ENCODE measurements at regions of chr14 and their contacts with region 1.

Region 1: DNA sequence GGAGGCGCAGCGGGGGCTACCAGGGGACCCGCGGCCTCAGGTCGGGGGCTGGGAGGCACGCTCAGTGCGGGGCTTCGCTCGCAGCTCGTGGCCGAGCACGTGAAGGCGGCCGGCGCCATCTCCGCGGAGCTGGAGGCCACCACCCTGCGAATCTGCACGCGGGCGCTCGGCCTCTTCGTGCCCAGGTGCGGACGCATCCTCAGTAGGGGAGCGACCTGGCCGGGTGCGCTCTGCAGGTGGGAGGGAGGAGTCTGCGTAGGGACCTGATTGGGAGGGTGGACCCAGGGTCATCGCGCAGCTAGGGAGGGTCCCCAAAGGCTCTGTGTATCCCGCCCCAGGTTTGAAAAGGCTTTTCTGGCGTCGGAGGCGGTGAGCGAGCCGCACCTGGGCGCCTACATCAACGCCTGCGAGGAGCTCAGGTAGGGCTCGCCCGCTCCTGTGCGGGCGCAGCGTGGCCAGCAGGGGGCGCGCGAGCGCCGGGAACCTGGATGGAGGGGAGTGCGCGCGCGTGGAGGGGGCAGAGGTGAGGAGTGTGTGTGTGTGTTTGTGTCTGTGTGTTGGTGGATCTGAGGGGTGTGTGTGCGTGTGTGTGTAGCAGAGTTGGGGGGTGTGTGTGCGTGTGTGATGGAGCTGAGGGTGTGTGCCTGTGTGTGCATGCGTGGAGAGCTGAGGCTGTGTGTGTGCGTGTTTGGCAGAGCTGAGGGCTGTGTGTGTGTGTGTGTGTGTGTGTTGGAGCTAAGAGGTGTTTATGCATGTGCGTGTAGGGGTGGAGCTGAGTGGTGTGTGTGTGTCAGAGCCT is 10.3 kb downstream of the EXOC3L4 start:
- DNase-seq: no peak
- ATAC-seq: peak; percentile 65
- H3K4me3 ChIP-seq: peak overlapping the region in 1 of 2 experiments; percentile 24; a peak in 1 of 4 replicates
- H3K27ac ChIP-seq: peak overlapping the region; percentile 63; the same call in 1 of the 2 replicates
- H3K4me1 ChIP-seq: peaks cover 16% of the 10 kb centered on the region
- H3K27me3 ChIP-seq: no peaks in the 10 kb centered on the region
- CTCF ChIP-seq: peak; percentile 93

Region 2: DNA sequence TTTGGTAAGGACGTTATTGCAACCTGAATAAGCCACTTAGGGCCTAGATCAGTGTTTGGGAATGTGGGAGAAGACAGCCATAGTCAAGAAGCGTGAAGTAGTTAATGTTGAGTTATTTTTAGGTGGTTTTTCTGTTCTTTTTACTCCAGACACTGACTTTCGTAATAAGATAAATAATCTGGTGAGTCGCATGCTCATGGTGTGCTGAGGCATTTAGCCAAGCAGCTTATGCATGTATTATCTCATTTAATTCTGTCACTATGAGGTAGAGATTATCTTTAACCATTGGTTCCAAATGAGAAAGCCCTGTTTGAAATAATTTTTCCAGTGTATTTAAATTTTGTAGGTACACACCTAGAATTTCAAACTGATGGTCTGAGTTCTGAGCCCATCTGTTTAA is 445.1 kb before region 1 on chr14:
- CTCF ChIA-PET with region 1: no interaction called
- POLR2A ChIA-PET with region 1: no interaction called
- in situ Hi-C with region 1: no loop called
- intact Hi-C with region 1: no loop called
- DNase-seq: no peak
- ATAC-seq: no peak
- H3K4me3 ChIP-seq: no peak overlapping the region
- H3K27ac ChIP-seq: no peak overlapping the region
- H3K4me1 ChIP-seq: peaks cover 16% of the 10 kb centered on the region
- H3K27me3 ChIP-seq: no peaks in the 10 kb centered on the region
- CTCF ChIP-seq: no peak

Region 3: DNA sequence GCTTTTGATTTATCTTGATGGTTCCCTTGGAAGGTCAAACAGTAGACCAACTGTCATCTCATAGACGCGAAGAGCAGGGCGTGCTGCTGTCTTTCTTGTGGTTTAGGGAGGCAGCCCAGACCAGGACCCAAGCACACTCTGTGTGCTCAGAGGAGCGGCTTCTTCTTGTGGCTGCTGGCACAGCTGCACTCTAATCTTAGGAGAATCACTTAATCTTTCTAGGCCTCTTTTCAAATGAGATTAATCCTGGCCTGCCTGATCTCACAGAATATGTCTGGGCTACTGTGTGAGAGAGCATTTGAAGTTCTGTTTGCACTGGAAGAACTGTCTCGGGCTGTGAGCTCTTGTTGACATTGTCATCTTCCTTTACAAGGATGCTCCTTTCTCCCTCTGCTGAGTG is 387.6 kb before region 1 on chr14:
- CTCF ChIA-PET with region 1: no interaction called
- POLR2A ChIA-PET with region 1: no interaction called
- in situ Hi-C with region 1: no loop called
- intact Hi-C with region 1: no loop called
- DNase-seq: no peak
- ATAC-seq: no peak
- H3K4me3 ChIP-seq: no peak overlapping the region
- H3K27ac ChIP-seq: no peak overlapping the region
- H3K4me1 ChIP-seq: no peaks in the 10 kb centered on the region
- H3K27me3 ChIP-seq: no peaks in the 10 kb centered on the region
- CTCF ChIP-seq: no peak

Region 4: DNA sequence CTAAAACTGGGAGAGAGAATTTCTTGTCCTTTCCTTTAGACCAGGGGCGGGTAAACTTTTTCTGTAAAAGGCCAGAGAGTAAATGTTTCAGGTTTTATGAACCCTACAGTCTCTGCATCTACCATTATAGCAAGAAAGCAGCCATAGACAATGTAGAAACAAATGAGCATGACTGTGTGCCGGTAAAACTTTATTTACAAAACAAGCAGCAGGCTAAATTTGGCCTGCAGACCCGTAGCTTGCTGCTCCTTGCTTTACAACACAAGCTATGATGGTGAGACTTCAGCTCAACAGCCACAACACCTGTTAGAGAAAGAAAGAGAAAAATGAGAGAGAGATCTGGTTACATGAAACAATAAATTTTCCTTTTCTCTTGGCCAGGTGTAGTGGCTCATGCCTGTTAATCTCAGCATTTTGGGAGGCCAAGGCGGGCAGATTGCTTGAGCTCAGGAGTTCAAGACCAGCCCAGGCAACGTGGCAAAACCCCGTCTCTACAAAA is 43.3 kb before region 1 on chr14:
- CTCF ChIA-PET with region 1: no interaction called
- POLR2A ChIA-PET with region 1: no interaction called
- in situ Hi-C with region 1: no loop called
- intact Hi-C with region 1: no loop called
- DNase-seq: no peak
- ATAC-seq: no peak
- H3K4me3 ChIP-seq: no peak overlapping the region
- H3K27ac ChIP-seq: no peak overlapping the region
- H3K4me1 ChIP-seq: peaks cover 11% of the 10 kb centered on the region
- H3K27me3 ChIP-seq: no peaks in the 10 kb centered on the region
- CTCF ChIP-seq: no peak

Region 5: GRCh38 chr14:103133216-103134140 is 28.6 kb after region 1 on chr14:
- CTCF ChIA-PET with region 1: interaction called, 12 read pairs
- POLR2A ChIA-PET with region 1: interaction called, 4 read pairs
- in situ Hi-C with region 1: no loop called
- intact Hi-C with region 1: no loop called
- DNase-seq: no peak
- ATAC-seq: no peak
- H3K4me3 ChIP-seq: no peak overlapping the region
- H3K27ac ChIP-seq: no peak overlapping the region
- H3K4me1 ChIP-seq: peaks cover 75% of the 10 kb centered on the region
- H3K27me3 ChIP-seq: no peaks in the 10 kb centered on the region
- CTCF ChIP-seq: no peak

Region 6: DNA sequence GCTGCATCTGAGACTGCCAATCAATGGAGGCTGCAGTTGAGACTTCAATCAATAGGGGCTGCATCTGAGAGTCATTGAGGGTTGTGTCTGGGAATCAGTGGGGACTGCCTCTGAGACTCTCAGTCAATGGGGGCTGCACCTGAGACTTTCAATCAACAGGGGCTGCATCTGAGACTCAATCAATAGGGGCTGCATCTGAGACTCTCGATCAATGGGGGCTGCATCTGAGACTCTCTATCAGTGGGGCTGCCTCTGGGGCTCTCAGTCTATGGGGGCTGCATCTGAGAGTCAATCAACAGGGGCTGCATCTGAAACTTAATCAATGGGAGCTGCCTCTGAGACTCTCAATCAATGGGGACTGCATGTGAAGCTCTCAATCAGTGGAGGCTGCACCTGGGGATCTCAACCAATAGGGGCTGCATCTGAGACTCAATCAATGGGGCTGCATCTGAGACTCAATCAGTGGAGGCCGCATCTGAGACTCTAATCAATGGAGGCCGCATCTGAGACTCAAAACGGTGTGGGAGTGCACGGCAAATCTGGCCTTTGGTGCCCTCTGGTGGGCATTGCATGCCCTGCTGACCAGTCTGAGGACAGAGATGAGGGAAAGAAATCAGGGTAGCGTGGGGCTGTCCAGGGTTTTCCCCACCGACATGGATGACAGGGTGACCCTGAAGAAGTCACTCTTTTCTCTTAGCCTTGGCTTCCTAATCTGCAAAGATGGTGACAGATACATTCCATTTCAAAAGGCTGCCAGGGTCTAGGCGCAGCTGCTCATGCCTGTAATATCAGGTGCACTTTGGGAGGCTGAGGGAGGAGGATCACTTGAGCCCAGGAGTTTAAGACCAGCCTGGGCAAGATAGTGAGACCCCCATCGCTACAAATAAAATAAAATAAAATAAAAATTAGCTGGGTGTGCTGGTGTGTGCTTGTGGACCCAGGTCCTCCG is 187.8 kb after region 1 on chr14:
- CTCF ChIA-PET with region 1: interaction called, 13 read pairs
- POLR2A ChIA-PET with region 1: no interaction called
- in situ Hi-C with region 1: no loop called
- intact Hi-C with region 1: loop called (anchors 10 kb)
- DNase-seq: peak; percentile 55
- ATAC-seq: peak; percentile 95
- H3K4me3 ChIP-seq: no peak overlapping the region
- H3K27ac ChIP-seq: no peak overlapping the region
- H3K4me1 ChIP-seq: no peaks in the 10 kb centered on the region
- H3K27me3 ChIP-seq: no peaks in the 10 kb centered on the region
- CTCF ChIP-seq: peak; percentile 85

Region 7: DNA sequence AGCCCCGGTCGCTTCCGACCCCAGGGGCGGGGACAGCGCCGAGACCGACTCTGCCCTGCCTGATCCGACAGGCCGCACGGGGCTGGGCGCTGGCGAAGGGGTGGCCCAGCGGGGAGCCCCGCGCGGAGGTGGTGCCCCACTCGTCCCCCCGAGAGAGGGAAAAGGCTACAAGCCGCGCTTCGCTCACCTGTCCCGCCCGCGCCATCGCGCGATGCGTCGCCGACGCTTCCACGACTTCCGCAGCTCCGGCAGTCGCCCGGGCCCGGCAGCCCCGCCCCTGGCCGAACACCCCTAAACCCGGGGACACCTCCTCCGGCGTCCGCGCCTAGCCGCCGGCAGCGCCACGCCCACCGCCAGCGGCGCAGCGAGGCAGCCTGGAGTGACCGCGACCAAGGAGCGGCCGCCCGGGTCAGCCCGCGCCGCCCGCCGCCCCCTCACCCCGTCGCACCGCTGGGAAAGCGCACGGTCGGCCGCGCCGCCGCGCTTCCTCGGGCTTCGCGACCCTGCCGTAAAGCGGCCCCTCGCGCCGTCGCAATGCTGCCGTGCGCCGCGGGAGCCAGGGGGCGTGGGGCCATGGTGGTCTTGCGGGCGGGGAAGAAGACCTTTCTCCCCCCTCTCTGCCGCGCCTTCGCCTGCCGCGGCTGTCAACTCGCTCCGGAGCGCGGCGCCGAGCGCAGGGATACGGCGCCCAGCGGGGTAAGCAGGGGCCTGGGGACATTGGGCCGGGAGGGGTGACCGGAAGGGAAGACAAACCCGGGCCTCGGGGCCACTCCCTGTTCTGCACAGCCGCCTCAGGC is 457.8 kb after region 1 on chr14 and contains the starts of genes BAG5 and COA8:
- CTCF ChIA-PET with region 1: no interaction called
- POLR2A ChIA-PET with region 1: no interaction called
- in situ Hi-C with region 1: no loop called
- intact Hi-C with region 1: no loop called
- DNase-seq: no peak
- ATAC-seq: peak; percentile 90
- H3K4me3 ChIP-seq: peak within 1 kb of the TSS; percentile 89 to 97
- H3K27ac ChIP-seq: peak within 1 kb of the TSS; percentile 86
- H3K4me1 ChIP-seq: peaks cover 34% of the 10 kb centered on the region
- H3K27me3 ChIP-seq: no peaks in the 10 kb centered on the region
- CTCF ChIP-seq: no peak
- total RNA-seq, gene BAG5: 22.5 TPM
- total RNA-seq, gene COA8: 42.2 TPM

Measured in Panc1 (cell line).